ENCODE measurements at regions of chr14 and their contacts with region 1.

Region 1: GRCh38 chr14:102694530-102695166 is 82.6 kb upstream of the TRAF3 start:
- DNase-seq: no peak
- H3K4me3 ChIP-seq: no peak overlapping the region
- H3K27ac ChIP-seq: no peak overlapping the region
- H3K4me1 ChIP-seq: peaks cover 6 to 84% (median 22%) of the 10 kb centered on the region in 6 donors
- H3K27me3 ChIP-seq: no peaks in the 10 kb centered on the region
- CTCF ChIP-seq: peak; percentile 71 to 89 (median 80)
- POLR2A ChIP-seq: no peak

Region 2: DNA sequence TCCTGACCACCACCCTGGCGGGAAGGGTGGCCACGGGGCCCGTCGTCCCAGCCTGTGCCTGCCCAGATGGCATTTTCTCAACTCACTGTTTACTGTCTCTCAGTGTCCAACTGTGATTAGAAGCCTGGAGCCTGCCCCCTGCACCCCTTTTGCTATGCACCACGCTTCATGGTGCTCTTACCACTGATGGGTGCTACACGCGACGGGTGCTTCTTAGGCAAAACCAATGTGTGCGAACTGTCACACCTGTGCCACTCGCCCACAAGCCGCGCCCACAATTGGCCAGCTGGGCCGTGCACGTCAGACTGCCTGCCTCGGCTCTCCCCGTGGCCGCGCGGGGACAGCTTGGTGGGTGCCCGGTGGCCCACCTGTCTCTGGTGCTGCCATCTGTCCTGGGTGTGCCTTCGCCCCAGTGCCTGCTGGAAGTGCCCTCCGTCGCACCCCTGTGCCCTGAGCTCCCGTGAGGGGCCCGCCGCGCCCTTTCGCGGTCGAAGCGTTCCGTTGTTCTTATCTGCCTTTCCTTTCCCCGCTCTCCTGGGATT is 212.7 kb after region 1 on chr14:
- intact Hi-C with region 1: no loop called
- DNase-seq: peak; percentile 79
- H3K4me3 ChIP-seq: no peak overlapping the region
- H3K27ac ChIP-seq: no peak overlapping the region
- H3K4me1 ChIP-seq: peaks cover 0 to 25% (median 6%) of the 10 kb centered on the region in 6 donors
- H3K27me3 ChIP-seq: no peaks in the 10 kb centered on the region
- CTCF ChIP-seq: no peak
- POLR2A ChIP-seq: no peak

Region 3: DNA sequence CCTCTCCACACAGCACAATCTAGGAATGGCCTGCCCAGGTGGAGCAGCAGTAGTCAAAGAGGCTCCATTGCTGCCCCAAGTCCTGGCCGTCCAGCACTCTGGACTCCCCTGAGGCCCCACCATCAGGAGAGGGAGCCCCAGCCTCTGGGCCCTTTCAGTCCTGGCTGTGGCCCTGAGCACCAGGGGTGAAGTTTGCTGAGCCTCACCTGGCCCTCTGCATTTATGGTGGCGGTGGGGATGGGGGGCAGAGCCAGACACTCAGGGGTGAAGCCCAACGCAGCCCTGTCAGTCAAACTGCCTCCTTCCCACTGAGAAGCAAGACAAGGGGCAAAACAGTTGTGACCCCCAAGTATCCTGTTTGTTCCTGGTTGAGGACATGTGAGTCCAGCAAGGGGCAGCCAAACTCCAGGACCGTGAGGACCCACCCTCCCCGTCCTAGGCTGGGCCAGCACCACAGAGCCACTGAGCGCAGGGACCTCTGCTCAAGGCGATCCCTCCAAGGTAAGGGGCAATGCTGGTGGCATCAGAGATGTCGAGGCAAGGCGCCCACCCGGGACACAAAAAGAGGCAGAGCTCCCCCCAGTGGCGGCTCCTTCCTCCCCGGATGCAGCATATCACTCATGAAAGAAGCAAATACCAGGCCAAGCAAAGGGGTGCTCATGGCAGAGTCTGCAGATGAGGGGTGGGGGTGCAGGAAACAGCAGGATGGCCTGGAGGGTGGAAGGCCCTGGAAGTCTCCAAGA is 223.0 kb after region 1 on chr14:
- intact Hi-C with region 1: loop called (anchors 5 kb)
- DNase-seq: peak; percentile 89
- H3K4me3 ChIP-seq: no peak overlapping the region
- H3K27ac ChIP-seq: peak overlapping the region in 6 of 8 donors; percentile 38 to 80 (median 61)
- H3K4me1 ChIP-seq: peaks cover 11 to 55% (median 43%) of the 10 kb centered on the region in 6 donors
- H3K27me3 ChIP-seq: peaks cover 0 to 11% (median 3%) of the 10 kb centered on the region in 7 donors
- CTCF ChIP-seq: peak; percentile 28 to 76 (median 64)
- POLR2A ChIP-seq: no peak

Region 4: DNA sequence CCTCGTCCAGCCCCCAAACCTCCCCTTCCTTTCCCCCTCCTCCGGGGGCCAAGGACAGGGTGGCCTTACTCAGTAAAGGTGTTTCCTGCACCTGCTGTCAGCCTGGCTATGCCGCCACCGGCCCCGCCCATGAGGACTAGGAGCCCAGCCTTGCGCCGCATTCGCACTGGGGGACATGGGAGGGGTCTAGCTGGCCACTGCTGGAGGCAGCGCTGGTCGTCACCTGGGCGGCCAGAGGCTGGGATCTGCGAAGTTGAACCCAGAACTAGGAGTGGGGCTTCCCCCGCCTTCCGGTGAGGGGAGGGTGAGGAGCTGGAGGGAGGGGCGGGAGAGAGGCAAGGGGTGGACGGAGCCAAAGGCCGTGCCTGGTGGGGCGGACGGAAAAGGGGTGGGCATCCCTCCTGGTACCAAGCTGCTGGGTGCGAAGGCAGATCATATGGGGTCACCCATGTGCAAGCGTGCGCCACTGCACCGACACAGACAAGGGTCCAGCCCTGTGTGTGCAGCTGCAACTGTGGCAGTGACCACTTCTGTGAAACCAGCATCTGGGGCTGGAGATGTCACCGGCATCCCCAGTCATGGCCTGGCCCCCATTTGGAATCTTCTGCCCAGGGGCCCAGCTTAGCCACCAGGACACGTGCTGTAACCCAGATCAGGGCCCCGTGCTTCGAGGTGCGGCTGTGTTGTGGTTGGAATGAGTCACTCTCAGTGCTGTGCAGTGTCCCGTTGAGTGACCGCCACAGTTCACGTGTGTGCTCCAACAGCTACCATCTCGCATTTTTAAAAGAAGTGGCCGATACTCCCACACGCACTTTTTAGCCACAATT is 236.3 kb after region 1 on chr14:
- intact Hi-C with region 1: no loop called
- DNase-seq: peak; percentile 71
- H3K4me3 ChIP-seq: peak overlapping the region in 2 of 8 donors; percentile 50 to 73
- H3K27ac ChIP-seq: no peak overlapping the region
- H3K4me1 ChIP-seq: peaks cover 13 to 42% (median 34%) of the 10 kb centered on the region in 6 donors
- H3K27me3 ChIP-seq: peaks cover 3 to 54% (median 28%) of the 10 kb centered on the region in 7 donors
- CTCF ChIP-seq: no peak
- POLR2A ChIP-seq: no peak

Region 5: GRCh38 chr14:103091041-103091882 is 396.6 kb after region 1 on chr14:
- intact Hi-C with region 1: loop called (anchors 10 kb)
- DNase-seq: peak; percentile 93
- H3K4me3 ChIP-seq: peak overlapping the region in 7 of 8 donors; percentile 33 to 69 (median 47)
- H3K27ac ChIP-seq: peak overlapping the region in 6 of 8 donors; percentile 4 to 67 (median 52)
- H3K4me1 ChIP-seq: peaks cover 3 to 44% (median 27%) of the 10 kb centered on the region in 6 donors
- H3K27me3 ChIP-seq: peaks cover 0 to 46% (median 0%) of the 10 kb centered on the region in 7 donors
- CTCF ChIP-seq: peak; percentile 5 to 84 (median 67)
- POLR2A ChIP-seq: no peak